ENCODE measurements at regions of chr1 and their contacts with region 1.

Region 1: DNA sequence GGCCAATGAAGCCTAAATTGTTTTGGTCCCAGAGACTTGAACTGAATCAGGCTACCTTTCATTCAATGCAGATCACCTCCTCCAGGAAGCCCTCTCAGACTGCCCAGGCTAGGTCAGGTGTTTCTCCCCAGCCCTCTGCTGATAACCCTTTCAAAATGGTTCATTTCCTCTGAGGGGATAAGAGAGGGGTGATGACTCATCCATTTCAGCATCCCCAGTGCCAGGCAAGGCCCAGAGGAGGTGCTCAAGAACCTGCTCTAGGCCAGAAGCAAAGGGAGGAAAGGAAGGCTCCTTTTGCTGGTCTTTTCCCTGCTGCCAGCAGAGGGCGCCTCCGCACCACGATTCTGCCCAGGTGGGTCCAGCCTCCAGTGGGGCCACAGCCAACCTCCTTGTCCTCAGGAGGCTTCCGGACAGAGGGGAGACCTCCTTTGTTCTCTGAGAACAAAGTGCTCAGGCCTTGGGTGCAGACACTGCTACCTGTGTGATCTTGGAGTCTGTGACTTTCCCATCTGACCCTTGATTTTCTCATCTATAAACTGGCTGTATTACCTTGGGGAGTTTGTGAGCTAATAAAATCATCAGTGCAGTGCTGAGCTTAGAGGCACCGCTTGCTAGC is 45.3 kb upstream of the ARHGEF10L start:
- DNase-seq: peak; percentile 90

Region 2: DNA sequence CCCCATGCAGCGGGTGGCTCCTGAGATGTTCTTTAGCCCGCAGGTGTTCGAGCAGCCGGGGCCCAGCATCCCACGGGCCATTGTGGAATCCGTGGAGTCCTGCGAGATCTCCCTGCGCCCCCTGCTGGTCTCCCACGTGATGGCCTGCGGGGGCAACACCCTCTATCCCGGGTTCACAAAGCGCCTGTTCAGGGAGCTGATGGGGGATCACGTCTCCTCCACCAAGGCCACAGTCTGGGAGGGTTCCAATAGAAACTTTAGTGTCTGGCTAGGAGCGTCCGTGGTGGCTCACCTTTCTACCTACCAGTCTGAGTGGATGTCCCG is 331.9 kb after region 1 on chr1:
- intact Hi-C with region 1: loop called in 1 of 2 experiments (anchors 10 kb)
- DNase-seq: peak; percentile 88

Region 3: GRCh38 chr1:17909634-17910033 is 415.4 kb after region 1 on chr1:
- intact Hi-C with region 1: loop called in 1 of 2 experiments (anchors 10 kb)
- DNase-seq: peak; percentile 24

Region 4: GRCh38 chr1:18100491-18101063 is 606.4 kb after region 1 on chr1:
- intact Hi-C with region 1: loop called in 1 of 2 experiments (anchors 10 kb)
- DNase-seq: peak; percentile 89